ENCODE measurements at regions of chr22 and their contacts with region 1.

Region 1: GRCh38 chr22:40819599-40820140 is 524 bp upstream of the SLC25A17 start:
- DNase-seq: peak in 1 of 4 donors; percentile 44
- ATAC-seq: peak; percentile 24
- H3K4me3 ChIP-seq: peak overlapping the region; percentile 93 to 96
- H3K27ac ChIP-seq: peak overlapping the region; percentile 73 to 77
- H3K4me1 ChIP-seq: peaks cover 4 to 33% of the 10 kb centered on the region in 2 donors
- H3K27me3 ChIP-seq: no peaks in the 10 kb centered on the region
- CTCF ChIP-seq: no peak

Region 2: GRCh38 chr22:40955571-40955970 is 135.9 kb after region 1 on chr22:
- intact Hi-C with region 1: no loop called
- DNase-seq: no peak
- ATAC-seq: no peak
- H3K4me3 ChIP-seq: no peak overlapping the region
- H3K27ac ChIP-seq: no peak overlapping the region
- H3K4me1 ChIP-seq: peaks cover 7 to 29% of the 10 kb centered on the region in 2 donors
- H3K27me3 ChIP-seq: no peaks in the 10 kb centered on the region
- CTCF ChIP-seq: no peak

Region 3: GRCh38 chr22:41132550-41132949 is 312.9 kb after region 1 on chr22:
- intact Hi-C with region 1: loop called in 1 of 2 experiments (anchors 10 kb)
- DNase-seq: no peak
- ATAC-seq: no peak
- H3K4me3 ChIP-seq: no peak overlapping the region
- H3K27ac ChIP-seq: no peak overlapping the region
- H3K4me1 ChIP-seq: peaks cover 0 to 4% of the 10 kb centered on the region in 2 donors
- H3K27me3 ChIP-seq: no peaks in the 10 kb centered on the region
- CTCF ChIP-seq: no peak

Region 4: DNA sequence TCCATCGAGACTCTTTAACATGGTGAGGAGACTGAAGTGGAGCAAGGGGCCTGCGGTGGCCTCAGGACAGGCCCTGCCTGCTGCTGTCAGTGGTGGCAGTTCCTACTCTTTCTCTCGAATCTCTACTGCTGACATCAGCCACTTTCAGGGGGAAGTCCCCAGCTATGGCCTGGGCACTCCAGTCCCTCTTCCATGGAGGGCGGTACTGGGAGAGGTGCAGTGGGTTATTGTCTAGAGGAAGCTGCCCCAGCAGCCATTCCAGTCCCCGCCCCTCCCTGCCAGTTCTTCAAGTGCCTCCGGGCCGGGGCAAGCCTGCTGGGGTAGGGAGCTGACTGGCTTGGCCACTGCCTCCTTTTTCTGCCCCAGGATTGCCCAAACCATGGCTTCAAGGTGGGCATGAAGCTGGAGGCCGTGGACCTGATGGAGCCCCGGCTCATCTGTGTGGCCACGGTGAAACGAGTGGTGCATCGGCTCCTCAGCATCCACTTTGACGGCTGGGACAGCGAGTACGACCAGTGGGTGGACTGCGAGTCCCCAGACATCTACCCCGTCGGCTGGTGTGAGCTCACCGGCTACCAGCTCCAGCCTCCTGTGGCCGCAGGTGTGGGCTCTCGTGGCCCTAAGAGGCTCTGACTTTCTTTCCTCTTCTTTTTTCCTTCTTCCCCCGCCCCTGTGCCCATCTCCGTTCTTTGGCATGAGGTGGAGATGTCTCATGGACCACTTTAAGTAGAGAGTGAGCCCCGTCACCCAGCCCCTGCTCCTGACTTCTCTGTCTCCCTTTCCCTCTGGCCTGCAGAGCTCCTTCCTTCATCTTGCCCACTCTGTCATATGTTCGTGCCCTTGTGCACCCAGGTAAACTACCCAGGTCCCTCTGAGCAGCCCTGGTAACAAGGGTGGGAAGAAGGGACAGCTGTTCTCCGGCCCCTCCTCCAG is 407.3 kb after region 1 on chr22:
- intact Hi-C with region 1: no loop called
- DNase-seq: peak in 1 of 4 donors; percentile 69
- ATAC-seq: peak; percentile 82
- H3K4me3 ChIP-seq: no peak overlapping the region
- H3K27ac ChIP-seq: no peak overlapping the region
- H3K4me1 ChIP-seq: peaks cover 0 to 16% of the 10 kb centered on the region in 2 donors
- H3K27me3 ChIP-seq: no peaks in the 10 kb centered on the region
- CTCF ChIP-seq: no peak